ENCODE measurements at regions of chr9 and their contacts with region 1.

Region 1: DNA sequence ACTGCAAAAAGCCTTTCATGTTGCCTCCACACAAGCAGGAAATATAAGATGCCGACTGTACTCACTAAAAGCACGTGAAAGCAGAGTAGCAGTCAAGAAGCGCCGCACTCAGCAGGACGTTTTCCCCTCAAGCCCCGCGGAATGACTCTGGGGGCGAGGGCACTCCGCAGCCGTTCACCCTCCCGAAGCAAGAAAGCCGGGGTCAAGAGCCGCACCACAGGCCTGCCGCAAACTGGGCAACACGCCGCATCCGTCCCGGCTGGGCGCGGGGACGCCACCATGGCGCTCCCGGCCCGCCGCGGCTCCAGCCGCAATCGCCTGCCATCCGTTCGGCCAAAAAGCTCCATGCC is 364 bp downstream of the RPS6 start:
- DNase-seq: peak in 1 of 2 donors; percentile 38
- ATAC-seq: peak; percentile 47

Region 2: GRCh38 chr9:19030899-19031298 is 348.8 kb before region 1 on chr9:
- intact Hi-C with region 1: no loop called
- DNase-seq: no peak
- ATAC-seq: no peak

Region 3: GRCh38 chr9:19298436-19299000 is 81.2 kb before region 1 on chr9:
- intact Hi-C with region 1: no loop called
- DNase-seq: no peak
- ATAC-seq: peak; percentile 73

Region 4: GRCh38 chr9:19313573-19313972 is 66.1 kb before region 1 on chr9:
- intact Hi-C with region 1: no loop called
- DNase-seq: no peak
- ATAC-seq: no peak

Region 5: DNA sequence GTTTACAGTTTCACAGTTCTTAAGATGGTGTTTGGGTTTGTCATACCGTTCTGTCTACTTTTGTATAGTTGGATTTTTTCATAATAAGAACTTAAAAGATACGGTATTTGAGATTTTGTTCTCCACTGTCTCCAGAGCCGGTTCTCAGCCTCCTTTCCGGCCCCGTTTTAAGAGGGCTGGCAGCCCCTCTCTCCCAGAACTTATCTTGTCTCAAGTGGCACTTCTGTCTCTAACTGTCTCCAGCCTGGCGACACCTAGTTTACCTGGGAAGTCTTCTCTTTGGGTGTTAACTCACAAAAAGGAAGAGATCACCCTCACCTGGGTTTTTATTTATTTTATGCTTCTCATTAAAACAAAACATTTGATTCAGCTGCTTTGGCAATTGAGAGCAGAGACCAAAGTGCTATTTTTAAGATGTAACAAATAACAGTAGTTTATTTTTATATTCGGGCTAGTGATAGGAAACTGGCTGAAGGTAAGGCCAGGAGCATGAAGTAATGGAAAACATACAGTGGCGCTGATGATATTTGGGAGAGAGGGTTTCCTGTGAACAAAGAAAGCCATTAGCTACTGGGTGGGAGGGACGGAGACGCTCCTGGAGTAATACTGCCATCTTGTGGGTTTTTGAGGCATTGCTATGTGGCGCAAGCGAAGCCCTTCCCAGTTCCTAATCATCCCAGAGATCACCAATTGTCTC is 77.5 kb after region 1 on chr9:
- intact Hi-C with region 1: loop called in 1 of 2 experiments (anchors 10 kb)
- DNase-seq: peak; percentile 36 to 52
- ATAC-seq: peak; percentile 92